ENCODE measurements at regions of chr1 and their contacts with region 1.

Region 1: DNA sequence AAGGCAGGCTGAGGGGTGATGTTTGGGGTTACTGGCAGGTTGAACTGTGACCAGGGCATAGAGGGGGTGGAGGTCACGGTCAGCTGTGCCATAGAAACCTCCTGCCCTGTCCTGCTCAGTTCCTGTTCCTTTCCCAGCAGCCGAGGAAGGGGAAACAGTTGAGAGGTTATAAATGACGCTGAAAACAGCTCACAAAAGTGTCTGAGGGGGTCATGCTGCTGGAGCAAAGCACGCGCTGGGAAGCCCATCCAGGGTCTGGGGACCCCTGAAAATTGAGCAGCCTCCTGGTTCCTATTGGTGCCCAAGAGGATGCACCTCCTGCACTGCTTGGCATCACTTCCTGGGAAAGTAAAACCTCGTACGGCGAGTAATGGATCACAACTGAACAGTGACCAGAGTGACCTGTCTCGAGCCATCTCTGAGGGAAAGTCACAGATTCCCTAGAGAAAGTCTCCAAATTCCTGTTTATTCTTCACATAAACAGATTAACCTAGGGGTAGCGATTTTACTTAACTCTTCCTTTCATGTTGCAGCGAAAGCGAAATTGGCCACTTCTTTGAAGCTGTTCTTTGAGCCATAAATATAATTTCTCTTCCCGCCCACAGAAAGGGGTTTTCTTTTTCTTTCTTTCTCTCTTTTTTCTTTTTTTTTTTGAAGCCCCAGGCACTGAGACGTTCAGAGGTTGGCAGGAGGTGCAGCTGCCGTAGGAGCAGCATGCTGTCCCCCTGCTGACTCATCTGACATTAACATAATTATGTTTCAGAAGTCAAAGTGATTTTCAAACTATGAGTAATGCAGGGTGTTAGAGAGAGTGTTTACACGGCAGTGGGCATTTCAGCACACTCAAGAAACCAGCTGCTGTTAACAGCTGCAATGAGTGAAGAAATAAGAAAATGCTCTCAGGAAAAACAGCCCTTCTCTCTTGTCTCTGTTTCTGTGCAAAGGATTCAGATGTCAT is 41.8 kb upstream of the ATF3 start:
- DNase-seq: peak; percentile 14
- ATAC-seq: peak; percentile 71
- H3K4me3 ChIP-seq: peak overlapping the region; percentile 20 to 46 (median 23)
- H3K27ac ChIP-seq: no peak overlapping the region
- H3K4me1 ChIP-seq: peaks cover 15% of the 10 kb centered on the region
- H3K27me3 ChIP-seq: no peaks in the 10 kb centered on the region; a peak in 1 of 5 replicates
- CTCF ChIP-seq: no peak
- EP300 ChIP-seq: no peak
- POLR2A ChIP-seq: no peak
- RAD21 ChIP-seq: no peak

Region 2: GRCh38 chr1:212488397-212489283 is 78.2 kb before region 1 on chr1:
- CTCF ChIA-PET with region 1: no interaction called
- POLR2A ChIA-PET with region 1: no interaction called
- in situ Hi-C with region 1: no loop called
- intact Hi-C with region 1: loop called (anchors 10 kb)
- DNase-seq: peak; percentile 12
- ATAC-seq: no peak
- H3K4me3 ChIP-seq: no peak overlapping the region
- H3K27ac ChIP-seq: no peak overlapping the region
- H3K4me1 ChIP-seq: peaks cover 27% of the 10 kb centered on the region
- H3K27me3 ChIP-seq: peaks cover 4 to 12% of the 10 kb centered on the region in 2 experiments; a peak in 3 of 5 replicates
- CTCF ChIP-seq: no peak
- EP300 ChIP-seq: peak in 1 of 2 experiments; percentile 17; a peak in 1 of 4 replicates
- POLR2A ChIP-seq: no peak
- RAD21 ChIP-seq: no peak